T-cell (primary cell): ENCODE measurements at regions of chr7 and their contacts with region 1.

Region 1: GRCh38 chr7:54653905-54654304 is 105.1 kb downstream of the SEC61G start:
- DNase-seq: no peak
- ATAC-seq: no peak
- H3K4me3 ChIP-seq: no peak overlapping the region
- H3K4me3 Mint-ChIP-seq: no peak overlapping the region
- H3K27ac ChIP-seq: no peak overlapping the region
- H3K27ac Mint-ChIP-seq: no peak overlapping the region
- H3K4me1 ChIP-seq: no peaks in the 10 kb centered on the region
- H3K4me1 Mint-ChIP-seq: no peaks in the 10 kb centered on the region
- H3K27me3 ChIP-seq: no peaks in the 10 kb centered on the region
- H3K27me3 Mint-ChIP-seq: no peaks in the 10 kb centered on the region

Region 2: DNA sequence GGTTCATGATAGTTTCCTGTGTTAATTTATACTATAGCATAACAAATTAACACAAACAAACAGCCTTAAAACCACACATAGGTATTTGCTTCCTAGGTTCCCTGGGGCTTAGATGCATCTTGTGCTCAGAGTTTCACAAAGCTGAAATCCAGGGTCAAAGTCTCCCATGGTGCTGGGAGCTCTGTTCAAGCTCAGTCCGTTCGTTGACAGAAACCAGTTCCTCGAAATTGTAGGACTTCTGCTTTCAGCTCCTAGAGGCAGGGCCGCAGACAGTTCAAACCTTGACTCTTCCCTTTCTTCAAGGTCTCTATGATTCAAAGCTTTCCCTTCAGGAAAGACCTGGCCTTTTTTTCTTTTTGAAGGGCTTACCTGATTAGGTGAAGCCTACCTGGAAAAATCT is 21.2 kb before region 1 on chr7:
- CTCF ChIA-PET with region 1: no interaction called
- POLR2A ChIA-PET with region 1: no interaction called
- DNase-seq: no peak
- ATAC-seq: no peak
- H3K4me3 ChIP-seq: no peak overlapping the region
- H3K4me3 Mint-ChIP-seq: no peak overlapping the region
- H3K27ac ChIP-seq: no peak overlapping the region
- H3K27ac Mint-ChIP-seq: no peak overlapping the region
- H3K4me1 ChIP-seq: no peaks in the 10 kb centered on the region
- H3K4me1 Mint-ChIP-seq: no peaks in the 10 kb centered on the region
- H3K27me3 ChIP-seq: no peaks in the 10 kb centered on the region
- H3K27me3 Mint-ChIP-seq: no peaks in the 10 kb centered on the region

Region 3: DNA sequence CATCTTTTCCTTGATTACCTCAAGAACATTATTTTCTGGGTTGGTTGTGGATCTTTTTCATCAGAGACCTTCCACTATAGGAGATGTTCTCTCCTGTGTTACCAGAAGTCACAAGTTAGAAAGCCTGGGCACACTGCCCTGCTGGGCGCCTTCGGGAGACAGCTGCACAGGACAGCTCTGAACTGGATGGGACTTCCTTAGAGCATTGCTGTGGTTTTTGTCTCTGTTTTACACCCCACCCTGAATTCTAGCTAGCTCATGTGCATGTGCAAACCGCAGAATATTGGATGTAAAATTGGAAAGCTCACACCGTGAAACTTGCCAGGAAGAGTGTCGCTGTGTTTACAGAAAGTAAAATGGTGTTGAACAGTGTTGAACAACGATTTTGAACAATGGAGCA is 159.5 kb after region 1 on chr7:
- CTCF ChIA-PET with region 1: interaction called in 1 of 2 experiments, 11 read pairs
- POLR2A ChIA-PET with region 1: no interaction called
- DNase-seq: no peak
- ATAC-seq: no peak
- H3K4me3 ChIP-seq: no peak overlapping the region
- H3K4me3 Mint-ChIP-seq: no peak overlapping the region
- H3K27ac ChIP-seq: no peak overlapping the region
- H3K27ac Mint-ChIP-seq: no peak overlapping the region
- H3K4me1 ChIP-seq: no peaks in the 10 kb centered on the region
- H3K4me1 Mint-ChIP-seq: no peaks in the 10 kb centered on the region
- H3K27me3 ChIP-seq: no peaks in the 10 kb centered on the region
- H3K27me3 Mint-ChIP-seq: no peaks in the 10 kb centered on the region